Lower leg skin (tissue), 4 donors: ENCODE measurements at regions of chr22 and their contacts with region 1.

Region 1: GRCh38 chr22:37643225-37643847 is 3.9 kb downstream of the SH3BP1 start:
- DNase-seq: peak; percentile 81 to 96
- H3K4me3 ChIP-seq: no peak overlapping the region
- CTCF ChIP-seq: peak in 1 of 3 donors; percentile 80
- POLR2A ChIP-seq: no peak

Region 2: DNA sequence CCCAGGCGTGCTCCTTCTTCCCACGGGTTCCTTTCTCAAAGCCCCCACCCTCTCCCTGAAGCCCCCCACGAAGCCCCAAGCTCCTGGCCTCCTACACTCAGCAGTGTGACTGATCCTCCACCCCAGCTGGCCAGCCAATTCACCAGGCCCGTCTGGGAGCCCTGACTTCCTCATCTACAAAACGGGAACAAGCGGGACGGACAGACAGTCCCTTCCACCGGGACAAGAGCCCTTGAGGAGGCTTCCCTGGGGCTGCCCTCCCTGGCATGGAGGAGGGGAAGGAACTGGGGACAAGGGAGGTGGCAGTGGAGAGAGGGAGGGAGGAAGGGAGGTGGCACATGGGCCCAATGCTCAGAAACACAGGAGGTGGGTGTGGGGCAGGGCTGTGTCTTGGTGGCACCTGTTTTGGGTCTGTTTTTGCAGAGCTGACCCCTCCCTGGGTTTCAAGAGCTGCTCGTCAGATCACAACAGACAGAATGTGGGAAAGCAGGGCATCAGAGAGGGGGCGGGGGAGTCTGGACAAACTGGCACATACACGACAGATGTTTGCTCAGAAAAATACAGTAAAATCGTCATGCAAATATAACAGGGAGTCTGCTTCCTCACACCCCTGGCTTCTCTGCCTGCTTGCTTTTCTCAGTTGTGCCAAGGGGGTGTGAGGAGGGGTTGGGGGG is 272.9 kb before region 1 on chr22:
- intact Hi-C with region 1: no loop called
- DNase-seq: peak in 1 of 2 donors; percentile 31
- H3K4me3 ChIP-seq: no peak overlapping the region
- CTCF ChIP-seq: no peak
- POLR2A ChIP-seq: no peak

Region 3: GRCh38 chr22:37676736-37677492 is 33.6 kb after region 1 on chr22:
- intact Hi-C with region 1: no loop called
- DNase-seq: peak; percentile 80 to 96
- H3K4me3 ChIP-seq: peak overlapping the region; percentile 40
- CTCF ChIP-seq: no peak
- POLR2A ChIP-seq: no peak

Region 4: GRCh38 chr22:37797874-37798500 is 154.7 kb after region 1 on chr22:
- intact Hi-C with region 1: loop called (anchors 10 kb)
- DNase-seq: no peak
- H3K4me3 ChIP-seq: no peak overlapping the region
- CTCF ChIP-seq: no peak
- POLR2A ChIP-seq: no peak

Region 5: GRCh38 chr22:39325392-39325932 is 1682.1 kb after region 1 on chr22:
- intact Hi-C with region 1: no loop called
- DNase-seq: no peak
- H3K4me3 ChIP-seq: no peak overlapping the region
- CTCF ChIP-seq: no peak
- POLR2A ChIP-seq: no peak